Activated T-helper 1 cell treated with anti-CD3 and anti-CD28 coated beads, Interleukin-12 subunit alpha, Interleukin-12 subunit beta, Interleukin-2, Interleukin-4 antibody, amounts not matched to agents 30 ng/mL and 10 ng/mL and 1 ng/mL, durations not matched to agents 14 hours and 24 hours and 36 hours (primary cell): ENCODE measurements at regions of chr12 and their contacts with region 1.

Region 1: GRCh38 chr12:80178846-80179245 is 79.5 kb downstream of the OTOGL start:
- DNase-seq: no peak
- H3K4me3 Mint-ChIP-seq: no peak overlapping the region
- H3K27ac Mint-ChIP-seq: no peak overlapping the region
- H3K4me1 Mint-ChIP-seq: peaks cover 11% of the 10 kb centered on the region
- H3K27me3 Mint-ChIP-seq: peaks cover 2% of the 10 kb centered on the region

Region 2: DNA sequence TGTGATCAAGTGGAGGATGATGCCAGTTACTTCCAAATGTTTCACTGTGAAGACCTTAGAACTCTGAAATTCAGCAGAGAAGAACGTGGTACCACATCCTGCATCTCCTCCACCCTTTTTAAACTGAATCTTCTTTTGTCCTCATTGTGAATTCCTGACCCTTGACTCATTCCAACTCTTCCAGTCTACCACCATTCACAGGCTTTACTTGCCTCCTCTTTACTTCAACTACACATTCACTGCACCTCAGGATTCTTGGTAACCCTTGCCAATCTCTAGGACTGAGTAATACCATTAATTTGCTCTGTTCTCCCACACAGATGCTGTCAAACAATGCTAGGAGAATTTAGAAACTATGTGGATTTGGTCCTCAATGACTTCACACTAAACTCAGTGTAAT is 281.2 kb before region 1 on chr12:
- intact Hi-C with region 1: no loop called
- DNase-seq: no peak
- H3K4me3 Mint-ChIP-seq: no peak overlapping the region
- H3K27ac Mint-ChIP-seq: no peak overlapping the region
- H3K4me1 Mint-ChIP-seq: peaks cover 21% of the 10 kb centered on the region
- H3K27me3 Mint-ChIP-seq: no peaks in the 10 kb centered on the region

Region 3: GRCh38 chr12:80044694-80045046 is 134.2 kb before region 1 on chr12:
- intact Hi-C with region 1: loop called (anchors 5 kb)
- DNase-seq: no peak
- H3K4me3 Mint-ChIP-seq: no peak overlapping the region
- H3K27ac Mint-ChIP-seq: no peak overlapping the region
- H3K4me1 Mint-ChIP-seq: no peaks in the 10 kb centered on the region
- H3K27me3 Mint-ChIP-seq: peaks cover 2% of the 10 kb centered on the region

Region 4: DNA sequence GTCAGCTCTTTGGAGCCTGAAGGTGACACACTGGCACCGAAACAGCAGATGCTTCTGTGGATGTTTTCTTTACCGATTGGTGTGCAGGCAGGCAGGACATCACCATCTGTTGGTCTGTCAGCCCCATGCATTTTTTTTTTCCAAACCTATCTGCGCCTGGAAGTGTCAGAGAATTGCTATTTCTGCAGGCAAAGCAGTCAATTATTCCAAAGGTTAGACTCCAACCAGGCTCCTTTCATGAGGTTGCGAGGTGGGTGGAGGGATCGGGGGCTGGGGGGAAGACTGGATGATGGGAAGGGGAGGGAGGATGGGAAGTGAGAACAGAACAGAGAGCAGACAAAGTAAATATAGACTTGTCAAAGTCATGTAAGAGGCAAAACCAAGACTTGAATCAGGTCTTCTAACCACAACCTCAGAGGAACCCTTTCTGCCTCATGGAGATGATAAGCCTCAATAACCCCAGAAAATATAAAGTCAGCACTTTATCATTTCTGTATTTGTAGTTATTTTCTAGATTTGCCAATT is 38.2 kb after region 1 on chr12:
- intact Hi-C with region 1: no loop called
- DNase-seq: no peak
- H3K4me3 Mint-ChIP-seq: no peak overlapping the region
- H3K27ac Mint-ChIP-seq: no peak overlapping the region
- H3K4me1 Mint-ChIP-seq: no peaks in the 10 kb centered on the region
- H3K27me3 Mint-ChIP-seq: no peaks in the 10 kb centered on the region